Right ventricle myocardium inferior (tissue), 1 donor: ENCODE measurements at regions of chr11 and their contacts with region 1.

Region 1: DNA sequence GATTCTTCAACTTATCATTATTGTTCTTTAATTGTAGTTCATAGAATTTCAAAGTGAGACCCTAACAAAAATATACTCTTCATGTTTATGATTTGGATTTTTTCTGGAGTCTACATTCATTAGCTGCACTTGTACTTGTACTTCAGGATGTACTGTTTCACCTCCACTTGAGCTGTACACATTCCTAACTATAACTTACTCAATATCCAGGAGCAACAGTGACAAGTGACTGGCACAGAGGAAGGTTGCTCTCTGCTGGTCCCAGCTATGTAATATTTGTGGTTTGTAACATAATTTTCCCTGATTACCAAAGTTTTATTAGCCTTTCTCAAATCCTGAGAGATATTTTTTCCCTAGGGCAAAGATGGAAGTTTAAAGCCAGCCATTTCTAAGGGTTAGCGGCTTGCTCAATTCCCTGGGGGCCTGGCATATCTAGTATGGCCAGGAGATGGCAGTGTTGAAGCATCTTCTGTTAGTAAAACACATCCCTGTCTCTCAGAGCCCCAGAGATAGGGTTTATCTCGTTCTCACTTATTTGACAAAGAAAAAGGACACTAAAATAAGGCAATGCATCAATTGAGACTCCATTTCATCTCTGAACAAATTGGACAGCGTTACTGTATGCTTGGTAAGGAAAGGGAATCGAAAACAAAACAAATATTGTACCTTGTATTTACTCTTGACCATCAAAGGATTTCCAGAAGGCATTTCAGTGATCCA is 14.2 kb downstream of the OR52A5 start:
- DNase-seq: peak; percentile 50
- ATAC-seq: peak; percentile 64

Region 2: GRCh38 chr11:5013012-5013411 is 111.0 kb before region 1 on chr11:
- intact Hi-C with region 1: no loop called
- DNase-seq: no peak
- ATAC-seq: no peak

Region 3: GRCh38 chr11:5380740-5381342 is 256.9 kb after region 1 on chr11:
- intact Hi-C with region 1: loop called (anchors 2 kb)
- DNase-seq: no peak
- ATAC-seq: peak; percentile 44

Region 4: DNA sequence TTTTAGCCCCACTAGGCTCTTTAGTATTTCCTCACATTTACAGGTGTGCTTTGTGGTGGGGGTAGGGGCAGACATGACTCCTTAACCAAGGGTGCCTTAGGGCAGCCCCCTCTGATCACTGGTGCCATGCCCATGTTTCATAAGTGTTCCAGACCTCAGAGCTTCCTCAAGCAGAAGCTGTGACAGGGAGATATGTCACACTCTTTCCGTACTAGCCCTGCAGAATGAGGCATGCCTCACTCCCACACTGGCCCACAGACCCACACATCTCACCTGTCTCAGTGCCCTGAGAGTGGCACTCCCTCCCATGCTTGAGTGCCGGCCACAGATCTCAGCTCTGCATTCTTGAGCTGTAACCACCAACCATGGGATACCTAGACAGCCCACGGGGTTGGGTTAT is 960.6 kb after region 1 on chr11:
- intact Hi-C with region 1: no loop called
- DNase-seq: no peak
- ATAC-seq: no peak